ENCODE measurements at regions of chr20 and their contacts with region 1.

Region 1: DNA sequence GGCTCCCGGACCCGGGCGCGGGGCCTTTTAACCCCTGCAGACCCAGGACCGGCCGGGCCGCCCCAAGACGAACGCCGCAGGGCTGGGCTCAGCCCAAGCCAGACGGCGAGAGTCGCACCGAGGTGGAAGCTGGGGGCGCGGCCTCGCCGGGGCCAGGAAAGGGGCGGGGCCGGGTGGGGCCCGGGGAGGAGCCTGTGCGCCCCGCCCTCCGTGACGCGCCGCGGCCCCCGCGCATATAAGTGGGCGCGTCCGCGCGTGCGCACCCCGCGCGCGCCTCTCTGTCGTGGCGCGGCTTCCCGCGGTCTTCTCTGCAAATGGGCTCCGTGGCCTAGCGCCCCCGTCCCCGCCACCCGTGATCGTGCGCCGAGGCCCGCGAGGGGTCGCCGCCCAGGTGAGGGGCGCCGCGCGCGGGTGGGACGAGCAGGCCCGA is at the start of gene PPDPF:
- DNase-seq: peak in 1 of 2 experiments; percentile 90
- H3K4me3 ChIP-seq: peak within 1 kb of the TSS; percentile 97
- H3K4me3 Mint-ChIP-seq: peak within 1 kb of the TSS; percentile 92
- H3K27ac Mint-ChIP-seq: peak within 1 kb of the TSS; percentile 95
- H3K4me1 ChIP-seq: peaks cover 14% of the 10 kb centered on the region
- H3K4me1 Mint-ChIP-seq: no peaks in the 10 kb centered on the region
- H3K27me3 ChIP-seq: no peaks in the 10 kb centered on the region
- H3K27me3 Mint-ChIP-seq: no peaks in the 10 kb centered on the region
- CTCF ChIP-seq: no peak
- total RNA-seq, gene PPDPF: 511 and 634 TPM in 2 replicates

Region 2: GRCh38 chr20:63495741-63496595 is 24.6 kb before region 1 on chr20:
- CTCF ChIA-PET with region 1: interaction called, 15 read pairs
- POLR2A ChIA-PET with region 1: interaction called, 4 read pairs
- intact Hi-C with region 1: loop called (anchors 1 kb)
- DNase-seq: peak; percentile 74 to 84
- H3K4me3 ChIP-seq: no peak overlapping the region
- H3K4me3 Mint-ChIP-seq: no peak overlapping the region
- H3K27ac Mint-ChIP-seq: no peak overlapping the region
- H3K4me1 ChIP-seq: peaks cover 6% of the 10 kb centered on the region; the same call in 1 of the 2 replicates
- H3K4me1 Mint-ChIP-seq: no peaks in the 10 kb centered on the region
- H3K27me3 ChIP-seq: no peaks in the 10 kb centered on the region
- H3K27me3 Mint-ChIP-seq: no peaks in the 10 kb centered on the region
- CTCF ChIP-seq: peak; percentile 98

Region 3: DNA sequence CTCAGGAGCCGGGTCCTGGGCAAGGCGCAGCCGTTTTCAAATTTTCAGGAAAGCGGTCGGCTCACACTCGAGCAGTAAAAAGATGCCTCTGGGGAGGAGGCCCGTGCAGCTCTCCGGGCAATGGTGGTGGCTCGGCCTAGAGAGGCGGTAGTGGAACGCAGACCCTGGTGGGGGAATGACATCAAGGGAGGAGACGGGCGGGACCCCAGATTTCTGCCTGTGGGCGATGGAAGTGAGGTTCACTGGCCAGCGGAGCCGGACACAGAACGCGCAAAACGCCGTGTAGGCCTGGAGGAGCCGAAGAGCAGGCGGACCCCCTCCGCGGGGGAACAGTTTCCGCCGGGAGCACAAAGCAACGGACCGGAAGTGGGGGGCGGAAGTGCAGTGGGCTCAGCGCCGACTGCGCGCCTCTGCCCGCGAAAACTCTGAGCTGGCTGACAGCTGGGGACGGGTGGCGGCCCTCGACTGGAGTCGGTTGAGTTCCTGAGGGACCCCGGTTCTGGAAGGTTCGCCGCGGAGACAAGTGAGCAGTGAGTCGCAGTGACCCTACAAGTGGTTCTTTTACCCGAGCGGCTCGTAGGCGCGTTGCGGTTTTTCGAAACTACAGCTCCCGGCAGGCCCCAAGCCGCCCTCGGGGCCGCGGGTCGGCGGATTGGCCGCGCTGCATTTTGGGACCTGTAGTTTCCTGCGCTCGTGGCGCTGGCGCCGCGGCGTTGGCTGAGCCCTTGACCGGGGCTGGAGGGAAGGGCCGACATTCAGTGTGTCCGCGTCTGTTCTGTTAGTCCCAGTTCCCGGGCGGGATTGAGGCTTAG is 137.6 kb after region 1 on chr20 and contains the start of gene RTEL1:
- CTCF ChIA-PET with region 1: no interaction called
- POLR2A ChIA-PET with region 1: interaction called, 13 read pairs
- intact Hi-C with region 1: no loop called
- DNase-seq: peak; percentile 96 to 99
- H3K4me3 ChIP-seq: peak within 1 kb of the TSS; percentile 82
- H3K4me3 Mint-ChIP-seq: peak within 1 kb of the TSS; percentile 86
- H3K27ac Mint-ChIP-seq: peak within 1 kb of the TSS; percentile 77
- H3K4me1 ChIP-seq: peaks cover 10% of the 10 kb centered on the region
- H3K4me1 Mint-ChIP-seq: peaks cover 15% of the 10 kb centered on the region
- H3K27me3 ChIP-seq: no peaks in the 10 kb centered on the region
- H3K27me3 Mint-ChIP-seq: no peaks in the 10 kb centered on the region
- CTCF ChIP-seq: no peak
- total RNA-seq, gene RTEL1: 51.1 and 61.6 TPM in 2 replicates

Region 4: DNA sequence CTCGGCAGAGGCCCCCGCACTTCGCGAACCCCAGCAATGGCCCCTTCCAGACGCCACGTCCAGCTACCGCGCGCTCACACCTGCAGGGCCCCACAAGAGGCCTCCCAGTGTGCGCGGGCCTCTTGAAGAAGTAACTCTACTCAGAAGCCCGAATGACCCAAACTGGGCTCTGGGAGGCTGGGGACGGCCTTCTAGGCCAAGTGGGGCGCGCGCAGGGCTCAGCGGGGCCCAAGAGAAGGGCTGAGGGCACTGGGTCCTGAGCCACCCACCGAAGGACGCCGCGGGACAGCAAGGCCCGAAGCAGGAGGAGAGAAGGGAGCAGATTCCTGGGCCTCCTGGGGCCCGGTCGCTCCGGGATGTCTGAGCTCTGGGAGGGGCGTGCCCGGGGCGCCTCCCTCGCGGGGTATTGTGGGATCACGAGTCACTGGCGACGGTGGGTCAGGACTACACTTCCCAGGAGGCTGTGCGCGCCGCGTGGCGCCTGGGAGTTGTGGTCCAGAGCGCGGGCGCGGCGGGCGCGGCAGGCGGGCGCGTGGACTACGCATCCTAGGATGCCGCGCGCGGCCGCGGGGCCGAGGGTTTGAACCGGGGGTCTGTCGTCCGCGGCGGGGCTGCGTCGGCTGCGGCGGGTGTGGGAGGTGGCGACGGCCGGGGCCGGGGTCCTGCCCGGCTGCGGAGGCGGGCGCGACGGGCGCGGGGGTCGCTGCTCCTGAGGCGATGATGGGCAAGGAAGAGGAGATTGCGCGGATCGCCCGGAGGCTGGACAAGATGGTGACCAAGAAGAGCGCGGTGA is 542.3 kb after region 1 on chr20 and contains the start of gene TCEA2:
- CTCF ChIA-PET with region 1: no interaction called
- POLR2A ChIA-PET with region 1: interaction called, 10 read pairs
- intact Hi-C with region 1: no loop called
- DNase-seq: peak; percentile 99 to 100
- H3K4me3 ChIP-seq: peak within 1 kb of the TSS; percentile 74
- H3K4me3 Mint-ChIP-seq: peak within 1 kb of the TSS; percentile 81
- H3K27ac Mint-ChIP-seq: peak within 1 kb of the TSS; percentile 16
- H3K4me1 ChIP-seq: peaks cover 23% of the 10 kb centered on the region
- H3K4me1 Mint-ChIP-seq: peaks cover 28% of the 10 kb centered on the region
- H3K27me3 ChIP-seq: no peaks in the 10 kb centered on the region
- H3K27me3 Mint-ChIP-seq: no peaks in the 10 kb centered on the region
- CTCF ChIP-seq: no peak
- total RNA-seq, gene TCEA2: 39.9 and 48.3 TPM in 2 replicates